ENCODE measurements at regions of chr18 and their contacts with region 1.

Region 1: GRCh38 chr18:63339920-63340484 is 20.4 kb upstream of the BCL2 start:
- DNase-seq: no peak
- ATAC-seq: peak; percentile 82
- H3K4me3 ChIP-seq: no peak overlapping the region
- H3K27ac ChIP-seq: no peak overlapping the region
- H3K4me1 ChIP-seq: no peaks in the 10 kb centered on the region
- H3K27me3 ChIP-seq: no peaks in the 10 kb centered on the region
- CTCF ChIP-seq: peak; percentile 39 to 59 (median 53)
- EP300 ChIP-seq: no peak
- POLR2A ChIP-seq: no peak
- RAD21 ChIP-seq: peak; percentile 57

Region 2: GRCh38 chr18:63025251-63026090 is 314.5 kb before region 1 on chr18:
- CTCF ChIA-PET with region 1: interaction called, 11 read pairs
- POLR2A ChIA-PET with region 1: no interaction called
- RAD21 ChIA-PET with region 1: interaction called, 3 read pairs
- SMC1A ChIA-PET with region 1: interaction called, 5 read pairs
- in situ Hi-C with region 1: no loop called
- intact Hi-C with region 1: no loop called
- DNase-seq: no peak
- ATAC-seq: peak; percentile 59; the same call in 2 of the 3 replicates
- H3K4me3 ChIP-seq: no peak overlapping the region
- H3K27ac ChIP-seq: no peak overlapping the region
- H3K4me1 ChIP-seq: no peaks in the 10 kb centered on the region
- H3K27me3 ChIP-seq: no peaks in the 10 kb centered on the region
- CTCF ChIP-seq: peak; percentile 36 to 59 (median 40); a peak in 4 of 6 replicates
- EP300 ChIP-seq: no peak
- POLR2A ChIP-seq: no peak
- RAD21 ChIP-seq: peak; percentile 72

Region 3: GRCh38 chr18:63119647-63120046 is 220.4 kb before region 1 on chr18:
- CTCF ChIA-PET with region 1: interaction called, 12 read pairs
- POLR2A ChIA-PET with region 1: no interaction called
- RAD21 ChIA-PET with region 1: interaction called, 3 read pairs
- SMC1A ChIA-PET with region 1: interaction called, 4 read pairs
- in situ Hi-C with region 1: no loop called
- intact Hi-C with region 1: no loop called
- DNase-seq: no peak
- ATAC-seq: peak; percentile 78
- H3K4me3 ChIP-seq: no peak overlapping the region
- H3K27ac ChIP-seq: no peak overlapping the region
- H3K4me1 ChIP-seq: no peaks in the 10 kb centered on the region
- H3K27me3 ChIP-seq: no peaks in the 10 kb centered on the region
- CTCF ChIP-seq: peak; percentile 49 to 65 (median 52); a peak in 5 of 6 replicates
- EP300 ChIP-seq: no peak
- POLR2A ChIP-seq: no peak
- RAD21 ChIP-seq: peak; percentile 70

Region 4: GRCh38 chr18:63131106-63131958 is 208.7 kb before region 1 on chr18:
- CTCF ChIA-PET with region 1: interaction called, 15 read pairs
- POLR2A ChIA-PET with region 1: no interaction called
- RAD21 ChIA-PET with region 1: interaction called, 5 read pairs
- SMC1A ChIA-PET with region 1: interaction called, 6 read pairs
- in situ Hi-C with region 1: no loop called
- intact Hi-C with region 1: no loop called
- DNase-seq: no peak
- ATAC-seq: peak; percentile 84
- H3K4me3 ChIP-seq: no peak overlapping the region
- H3K27ac ChIP-seq: peak overlapping the region; percentile 49
- H3K4me1 ChIP-seq: peaks cover 24% of the 10 kb centered on the region
- H3K27me3 ChIP-seq: no peaks in the 10 kb centered on the region
- CTCF ChIP-seq: peak; percentile 52 to 65 (median 59)
- EP300 ChIP-seq: no peak
- POLR2A ChIP-seq: no peak
- RAD21 ChIP-seq: peak; percentile 76

Region 5: GRCh38 chr18:63329431-63330145 is 10.4 kb before region 1 on chr18:
- CTCF ChIA-PET with region 1: interaction called, 49 read pairs
- POLR2A ChIA-PET with region 1: interaction called, 3 read pairs
- RAD21 ChIA-PET with region 1: no interaction called
- SMC1A ChIA-PET with region 1: interaction called, 19 read pairs
- in situ Hi-C with region 1: no loop called
- intact Hi-C with region 1: no loop called
- DNase-seq: no peak
- ATAC-seq: no peak
- H3K4me3 ChIP-seq: no peak overlapping the region
- H3K27ac ChIP-seq: no peak overlapping the region
- H3K4me1 ChIP-seq: no peaks in the 10 kb centered on the region
- H3K27me3 ChIP-seq: no peaks in the 10 kb centered on the region
- CTCF ChIP-seq: no peak
- EP300 ChIP-seq: no peak
- POLR2A ChIP-seq: no peak
- RAD21 ChIP-seq: no peak

Region 6: DNA sequence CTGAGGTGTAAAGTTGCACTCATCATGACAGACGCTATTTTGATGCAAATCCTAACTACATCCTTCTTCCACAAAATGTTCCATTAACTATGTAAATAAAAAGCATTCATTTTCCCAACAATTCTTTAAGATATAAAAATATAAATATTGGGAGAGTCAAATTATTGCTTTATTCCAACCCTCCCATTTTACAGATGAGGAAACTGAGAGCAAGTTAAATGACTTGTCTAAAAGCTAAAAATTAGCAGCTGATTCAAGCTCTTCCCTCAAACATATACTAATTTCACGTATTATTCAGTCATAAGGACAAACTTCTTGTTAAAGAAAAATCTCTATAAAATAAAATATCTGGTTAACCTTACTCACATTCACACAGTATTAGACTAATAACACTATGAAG is 10.2 kb after region 1 on chr18:
- CTCF ChIA-PET with region 1: interaction called, 24 read pairs
- POLR2A ChIA-PET with region 1: interaction called, 3 read pairs
- RAD21 ChIA-PET with region 1: no interaction called
- SMC1A ChIA-PET with region 1: interaction called, 3 read pairs
- in situ Hi-C with region 1: no loop called
- intact Hi-C with region 1: no loop called
- DNase-seq: no peak
- ATAC-seq: no peak
- H3K4me3 ChIP-seq: no peak overlapping the region
- H3K27ac ChIP-seq: no peak overlapping the region
- H3K4me1 ChIP-seq: no peaks in the 10 kb centered on the region
- H3K27me3 ChIP-seq: no peaks in the 10 kb centered on the region
- CTCF ChIP-seq: no peak
- EP300 ChIP-seq: no peak
- POLR2A ChIP-seq: no peak
- RAD21 ChIP-seq: no peak